ENCODE measurements at regions of chr20 and their contacts with region 1.

Region 1: DNA sequence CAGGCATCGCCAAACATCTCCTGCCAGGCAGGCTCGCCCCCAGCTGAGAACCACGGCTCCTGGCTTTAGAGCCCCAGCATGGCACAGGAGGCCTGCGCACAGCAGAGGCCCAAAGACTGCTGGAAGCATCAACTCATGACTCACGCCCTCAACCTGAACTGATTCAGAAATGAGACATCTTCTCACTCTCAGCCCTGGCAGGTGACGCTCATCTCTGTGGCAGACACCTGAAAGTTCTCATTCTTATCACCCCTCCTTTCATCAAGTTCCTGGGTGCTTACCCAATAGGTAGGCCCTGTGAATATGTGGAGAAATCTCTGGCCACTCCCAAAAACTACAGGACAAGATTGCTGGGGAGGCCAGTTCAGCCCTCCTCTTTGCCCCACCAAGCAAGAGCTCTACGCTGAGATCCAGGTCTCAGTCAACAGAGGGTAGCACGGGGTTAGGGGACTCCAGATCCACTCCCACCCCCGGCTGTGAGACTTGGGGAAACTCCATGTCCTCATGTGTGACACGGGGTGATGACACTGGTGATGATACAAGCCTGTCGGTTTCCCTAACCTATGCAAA is 11.3 kb downstream of the NFATC2 start:
- DNase-seq: no peak

Region 2: GRCh38 chr20:51462566-51463276 is 68.5 kb before region 1 on chr20:
- intact Hi-C with region 1: loop called (anchors 2 kb)
- DNase-seq: peak; percentile 87

Region 3: GRCh38 chr20:51569827-51570738 is 38.9 kb after region 1 on chr20:
- intact Hi-C with region 1: loop called (anchors 5 kb)
- DNase-seq: peak; percentile 77

Region 4: DNA sequence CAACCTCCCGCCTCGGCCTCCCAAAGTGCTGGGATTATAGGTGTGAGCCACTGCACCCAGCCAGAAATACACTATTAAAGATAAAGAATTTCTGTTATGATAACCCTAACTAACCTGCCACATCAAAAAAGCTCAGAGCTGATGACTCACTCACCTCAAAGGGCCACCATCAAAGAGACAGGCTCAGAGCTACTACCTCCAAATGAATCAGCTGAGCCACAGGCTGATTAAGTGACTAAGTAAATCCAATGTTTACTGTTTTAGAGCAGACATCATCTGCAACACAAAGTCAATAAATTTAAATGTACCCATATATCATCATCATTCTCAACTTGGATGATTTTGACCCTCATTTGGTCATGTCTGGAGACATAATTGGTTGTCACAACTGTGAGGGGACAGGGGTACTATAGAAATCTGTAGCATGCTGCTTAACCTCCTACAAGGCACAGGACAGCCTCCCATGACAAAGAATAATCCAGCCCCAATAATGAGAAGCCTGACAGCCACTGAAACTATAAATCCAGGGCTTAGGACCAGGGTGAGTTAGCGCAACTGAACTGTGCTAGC is 130.5 kb after region 1 on chr20:
- intact Hi-C with region 1: no loop called
- DNase-seq: no peak

Measured in cardiac septum (tissue), 1 donor.